Cardiac septum (tissue), 1 donor: ENCODE measurements at regions of chr20 and their contacts with region 1.

Region 1: GRCh38 chr20:3218307-3218988 is 9.2 kb downstream of the ITPA start:
- DNase-seq: peak; percentile 86

Region 2: DNA sequence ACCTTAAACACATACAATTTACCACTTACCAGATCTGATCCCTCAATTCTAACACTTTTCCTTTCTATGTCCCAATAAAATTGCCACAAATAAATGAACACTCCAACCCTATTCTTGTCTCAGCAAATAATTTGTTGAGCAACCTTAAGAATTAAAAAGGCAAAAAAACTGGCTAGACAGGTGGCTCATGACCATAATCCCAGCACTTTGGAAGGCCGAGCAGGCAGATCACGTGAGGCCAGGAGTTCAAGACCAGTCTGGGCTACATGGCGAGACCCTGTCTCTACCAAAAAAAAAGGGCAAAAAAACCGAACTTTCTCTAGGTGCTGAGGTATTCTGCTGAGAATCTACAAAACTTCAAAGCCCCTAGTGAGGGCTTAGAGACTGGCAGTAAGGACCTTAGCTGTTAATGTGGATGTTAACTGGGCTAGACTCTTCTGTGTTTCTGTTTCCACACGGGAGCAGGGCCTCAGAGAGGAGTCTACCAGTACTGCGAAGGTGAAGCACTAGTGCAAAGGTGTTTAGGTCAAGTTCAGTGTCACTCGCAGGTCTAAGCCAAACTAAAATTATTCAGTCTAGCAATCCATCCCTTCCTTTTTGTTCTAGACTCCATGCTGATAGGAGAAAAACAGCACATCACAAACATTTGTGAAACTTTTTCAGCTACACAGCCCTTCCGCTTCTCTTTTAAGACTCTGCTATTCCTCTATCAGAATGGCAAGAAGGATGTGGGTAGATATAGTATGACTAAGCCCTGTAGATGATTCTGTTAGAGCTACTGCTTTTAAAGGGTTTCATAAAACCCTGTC is 61.4 kb before region 1 on chr20:
- intact Hi-C with region 1: no loop called
- DNase-seq: no peak

Region 3: GRCh38 chr20:3204124-3204822 is 14.2 kb before region 1 on chr20 and contains the start of gene DDRGK1:
- intact Hi-C with region 1: no loop called
- DNase-seq: peak; percentile 96
- total RNA-seq, gene DDRGK1: 29.1 TPM

Region 4: GRCh38 chr20:3276680-3277015 is 58.2 kb after region 1 on chr20:
- intact Hi-C with region 1: no loop called
- DNase-seq: no peak

Region 5: GRCh38 chr20:3316136-3316535 is 97.7 kb after region 1 on chr20:
- intact Hi-C with region 1: loop called (anchors 2 kb)
- DNase-seq: no peak